ENCODE measurements at regions of chr11 and their contacts with region 1.

Region 1: DNA sequence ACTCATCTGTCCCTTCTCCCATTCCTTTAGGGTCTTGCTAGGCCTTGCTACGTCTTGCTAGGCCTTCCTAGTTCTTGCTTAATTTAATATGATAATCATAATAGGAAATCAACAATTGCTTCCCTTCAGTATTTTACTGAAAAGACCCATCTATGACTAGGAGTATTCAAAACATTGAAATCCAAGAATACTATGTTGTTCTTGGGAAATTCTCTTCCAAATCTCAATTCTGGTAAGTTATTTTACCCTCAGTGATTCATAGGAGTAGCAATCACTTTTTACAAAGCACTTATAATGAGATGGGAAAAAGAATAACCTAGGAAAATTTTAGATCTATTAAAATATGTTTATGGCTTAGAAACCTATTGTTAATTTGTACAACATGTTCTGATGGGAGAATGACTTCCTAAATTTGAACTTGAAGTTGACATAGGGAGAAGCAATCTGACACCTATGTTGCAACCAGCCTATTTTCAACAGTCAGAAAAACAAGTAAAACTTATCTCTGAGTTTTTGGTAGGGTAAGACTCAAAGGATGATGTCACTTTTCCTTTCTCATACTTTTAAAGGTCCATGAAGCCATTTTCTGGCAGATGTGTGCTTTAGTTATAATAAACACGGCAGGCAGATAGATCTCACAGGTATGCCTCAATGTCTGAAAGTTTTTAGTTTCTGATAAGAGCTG is 29.5 kb upstream of the HIPK3 start:
- DNase-seq: no peak
- H3K4me3 ChIP-seq: no peak overlapping the region
- H3K27ac ChIP-seq: peak overlapping the region; percentile 30 to 65 (median 50)
- H3K4me1 ChIP-seq: peaks cover 0 to 13% (median 3%) of the 10 kb centered on the region in 4 donors
- H3K27me3 ChIP-seq: no peaks in the 10 kb centered on the region
- CTCF ChIP-seq: no peak
- EP300 ChIP-seq: no peak
- POLR2A ChIP-seq: no peak

Region 2: GRCh38 chr11:33172996-33173395 is 54.7 kb before region 1 on chr11:
- intact Hi-C with region 1: loop called (anchors 10 kb)
- DNase-seq: no peak
- H3K4me3 ChIP-seq: no peak overlapping the region
- H3K27ac ChIP-seq: no peak overlapping the region
- H3K4me1 ChIP-seq: peaks cover 8 to 17% (median 11%) of the 10 kb centered on the region in 4 donors
- H3K27me3 ChIP-seq: no peaks in the 10 kb centered on the region
- CTCF ChIP-seq: no peak
- EP300 ChIP-seq: no peak
- POLR2A ChIP-seq: no peak